ENCODE measurements at regions of chr12 and their contacts with region 1.

Region 1: DNA sequence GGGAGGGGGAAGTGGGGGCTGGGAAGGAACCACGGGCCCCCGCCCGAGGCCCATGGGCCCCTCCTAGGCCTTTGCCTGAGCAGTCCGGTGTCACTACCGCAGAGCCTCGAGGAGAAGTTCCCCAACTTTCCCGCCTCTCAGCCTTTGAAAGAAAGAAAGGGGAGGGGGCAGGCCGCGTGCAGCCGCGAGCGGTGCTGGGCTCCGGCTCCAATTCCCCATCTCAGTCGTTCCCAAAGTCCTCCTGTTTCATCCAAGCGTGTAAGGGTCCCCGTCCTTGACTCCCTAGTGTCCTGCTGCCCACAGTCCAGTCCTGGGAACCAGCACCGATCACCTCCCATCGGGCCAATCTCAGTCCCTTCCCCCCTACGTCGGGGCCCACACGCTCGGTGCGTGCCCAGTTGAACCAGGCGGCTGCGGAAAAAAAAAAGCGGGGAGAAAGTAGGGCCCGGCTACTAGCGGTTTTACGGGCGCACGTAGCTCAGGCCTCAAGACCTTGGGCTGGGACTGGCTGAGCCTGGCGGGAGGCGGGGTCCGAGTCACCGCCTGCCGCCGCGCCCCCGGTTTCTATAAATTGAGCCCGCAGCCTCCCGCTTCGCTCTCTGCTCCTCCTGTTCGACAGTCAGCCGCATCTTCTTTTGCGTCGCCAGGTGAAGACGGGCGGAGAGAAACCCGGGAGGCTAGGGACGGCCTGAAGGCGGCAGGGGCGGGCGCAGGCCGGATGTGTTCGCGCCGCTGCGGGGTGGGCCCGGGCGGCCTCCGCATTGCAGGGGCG is at the start of gene GAPDH:
- DNase-seq: peak in 12 of 14 experiments; percentile 69 to 93 (median 81)
- ATAC-seq: peak; percentile 6
- H3K4me3 ChIP-seq: peak within 1 kb of the TSS; percentile 88
- H3K4me3 Mint-ChIP-seq: peak within 1 kb of the TSS; percentile 96
- H3K27ac ChIP-seq: peak within 1 kb of the TSS; percentile 91 to 93
- H3K27ac Mint-ChIP-seq: peak within 1 kb of the TSS; percentile 90
- H3K4me1 ChIP-seq: peaks cover 64% of the 10 kb centered on the region
- H3K4me1 Mint-ChIP-seq: peaks cover 53% of the 10 kb centered on the region
- H3K27me3 ChIP-seq: no peaks in the 10 kb centered on the region
- H3K27me3 Mint-ChIP-seq: no peaks in the 10 kb centered on the region
- CTCF ChIP-seq: no peak
- total RNA-seq, gene GAPDH: 498 to 508 TPM

Region 2: GRCh38 chr12:5264006-5264405 is 1270.1 kb before region 1 on chr12:
- CTCF ChIA-PET with region 1: no interaction called
- POLR2A ChIA-PET with region 1: no interaction called
- intact Hi-C with region 1: no loop called
- DNase-seq: no peak
- ATAC-seq: no peak
- H3K4me3 ChIP-seq: no peak overlapping the region
- H3K4me3 Mint-ChIP-seq: no peak overlapping the region
- H3K27ac ChIP-seq: no peak overlapping the region
- H3K27ac Mint-ChIP-seq: no peak overlapping the region
- H3K4me1 ChIP-seq: no peaks in the 10 kb centered on the region
- H3K4me1 Mint-ChIP-seq: no peaks in the 10 kb centered on the region
- H3K27me3 ChIP-seq: no peaks in the 10 kb centered on the region
- H3K27me3 Mint-ChIP-seq: no peaks in the 10 kb centered on the region
- CTCF ChIP-seq: no peak

Region 3: DNA sequence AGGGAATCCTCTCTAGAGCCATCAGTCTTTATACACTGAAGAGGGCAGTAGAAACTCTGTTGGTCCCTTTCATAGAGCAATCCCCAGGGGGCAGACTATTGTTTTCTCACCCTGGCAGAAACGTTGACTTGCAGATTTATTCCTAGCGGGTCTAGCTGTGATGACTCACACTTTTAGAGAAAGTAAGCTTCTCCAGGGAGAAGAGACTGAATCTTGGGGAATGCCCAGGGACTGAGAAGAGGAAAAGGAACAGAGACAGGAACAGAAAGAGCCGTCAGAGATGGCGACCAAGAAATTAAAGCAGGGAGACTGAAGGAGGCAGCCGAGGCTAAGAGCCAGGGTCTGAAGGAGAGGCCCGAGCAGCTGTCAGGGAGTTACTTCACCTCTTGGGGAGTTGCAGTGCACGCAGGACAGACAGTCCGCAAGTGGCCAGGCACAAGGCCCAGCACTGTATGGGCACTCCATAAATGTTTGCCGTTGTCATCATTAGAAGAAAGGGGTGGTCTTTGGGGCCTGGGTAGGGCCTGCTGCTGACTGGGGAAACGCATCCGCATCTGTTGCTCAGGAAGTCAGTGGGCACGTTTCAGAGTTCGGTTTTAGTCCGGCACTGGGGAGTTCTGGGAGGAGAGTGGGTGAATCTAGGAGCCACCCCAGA is 210.6 kb before region 1 on chr12:
- CTCF ChIA-PET with region 1: interaction called, 3 read pairs
- POLR2A ChIA-PET with region 1: interaction called, 3 read pairs
- intact Hi-C with region 1: loop called in 1 of 2 experiments (anchors 5 kb)
- DNase-seq: peak in 7 of 14 experiments; percentile 18 to 83 (median 63)
- ATAC-seq: peak; percentile 89
- H3K4me3 ChIP-seq: peak overlapping the region; percentile 12
- H3K4me3 Mint-ChIP-seq: peak overlapping the region; percentile 86
- H3K27ac ChIP-seq: peak overlapping the region; percentile 12 to 13
- H3K27ac Mint-ChIP-seq: peak overlapping the region; percentile 85
- H3K4me1 ChIP-seq: peaks cover 45% of the 10 kb centered on the region
- H3K4me1 Mint-ChIP-seq: peaks cover 60% of the 10 kb centered on the region
- H3K27me3 ChIP-seq: no peaks in the 10 kb centered on the region
- H3K27me3 Mint-ChIP-seq: no peaks in the 10 kb centered on the region
- CTCF ChIP-seq: peak; percentile 72

Region 4: GRCh38 chr12:6341417-6342139 is 192.5 kb before region 1 on chr12 and contains the start of gene TNFRSF1A:
- CTCF ChIA-PET with region 1: interaction called, 3 read pairs
- POLR2A ChIA-PET with region 1: interaction called, 9 read pairs
- intact Hi-C with region 1: loop called in 1 of 2 experiments (anchors 2 kb)
- DNase-seq: peak in 9 of 14 experiments; percentile 31 to 75 (median 44)
- ATAC-seq: peak; percentile 54
- H3K4me3 ChIP-seq: peak within 1 kb of the TSS; percentile 100
- H3K4me3 Mint-ChIP-seq: no peak within 1 kb of the TSS
- H3K27ac ChIP-seq: peak within 1 kb of the TSS; percentile 80 to 90
- H3K27ac Mint-ChIP-seq: no peak within 1 kb of the TSS
- H3K4me1 ChIP-seq: peaks cover 78% of the 10 kb centered on the region
- H3K4me1 Mint-ChIP-seq: peaks cover 39% of the 10 kb centered on the region
- H3K27me3 ChIP-seq: no peaks in the 10 kb centered on the region
- H3K27me3 Mint-ChIP-seq: no peaks in the 10 kb centered on the region
- CTCF ChIP-seq: no peak
- total RNA-seq, gene TNFRSF1A: 16.3 to 19.2 TPM

Region 5: GRCh38 chr12:6443361-6443983 is 90.6 kb before region 1 on chr12:
- CTCF ChIA-PET with region 1: interaction called, 4 read pairs
- POLR2A ChIA-PET with region 1: interaction called, 31 read pairs
- intact Hi-C with region 1: no loop called
- DNase-seq: peak in 3 of 14 experiments; percentile 32 to 47 (median 44)
- ATAC-seq: no peak
- H3K4me3 ChIP-seq: no peak overlapping the region
- H3K4me3 Mint-ChIP-seq: peak overlapping the region; percentile 98
- H3K27ac ChIP-seq: peak overlapping the region; percentile 64 to 65
- H3K27ac Mint-ChIP-seq: peak overlapping the region; percentile 97
- H3K4me1 ChIP-seq: peaks cover 56% of the 10 kb centered on the region
- H3K4me1 Mint-ChIP-seq: peaks cover 63% of the 10 kb centered on the region
- H3K27me3 ChIP-seq: no peaks in the 10 kb centered on the region
- H3K27me3 Mint-ChIP-seq: no peaks in the 10 kb centered on the region
- CTCF ChIP-seq: no peak

Region 6: GRCh38 chr12:6451348-6452244 is 82.5 kb before region 1 on chr12 and contains the start of gene TAPBPL:
- CTCF ChIA-PET with region 1: interaction called, 11 read pairs
- POLR2A ChIA-PET with region 1: interaction called, 42 read pairs
- intact Hi-C with region 1: no loop called
- DNase-seq: peak; percentile 61 to 95 (median 74)
- ATAC-seq: peak; percentile 92
- H3K4me3 ChIP-seq: peak within 1 kb of the TSS; percentile 97
- H3K4me3 Mint-ChIP-seq: peak within 1 kb of the TSS; percentile 94
- H3K27ac ChIP-seq: peak within 1 kb of the TSS; percentile 96 to 99
- H3K27ac Mint-ChIP-seq: peak within 1 kb of the TSS; percentile 98
- H3K4me1 ChIP-seq: peaks cover 71% of the 10 kb centered on the region
- H3K4me1 Mint-ChIP-seq: peaks cover 77% of the 10 kb centered on the region
- H3K27me3 ChIP-seq: no peaks in the 10 kb centered on the region
- H3K27me3 Mint-ChIP-seq: no peaks in the 10 kb centered on the region
- CTCF ChIP-seq: no peak
- total RNA-seq, gene TAPBPL: 14.7 to 15.8 TPM

Region 7: GRCh38 chr12:6493497-6494257 is 40.4 kb before region 1 on chr12 and contains the start of gene NCAPD2:
- CTCF ChIA-PET with region 1: interaction called, 28 read pairs
- POLR2A ChIA-PET with region 1: interaction called, 13 read pairs
- intact Hi-C with region 1: loop called (anchors 1 kb)
- DNase-seq: peak; percentile 87 to 98 (median 92)
- ATAC-seq: peak; percentile 84
- H3K4me3 ChIP-seq: peak within 1 kb of the TSS; percentile 96
- H3K4me3 Mint-ChIP-seq: peak within 1 kb of the TSS; percentile 93
- H3K27ac ChIP-seq: peak within 1 kb of the TSS; percentile 89 to 94
- H3K27ac Mint-ChIP-seq: peak within 1 kb of the TSS; percentile 91
- H3K4me1 ChIP-seq: peaks cover 34% of the 10 kb centered on the region
- H3K4me1 Mint-ChIP-seq: peaks cover 48% of the 10 kb centered on the region
- H3K27me3 ChIP-seq: no peaks in the 10 kb centered on the region
- H3K27me3 Mint-ChIP-seq: no peaks in the 10 kb centered on the region
- CTCF ChIP-seq: no peak
- total RNA-seq, gene NCAPD2: 13.7 to 14.9 TPM

Measured in CD4-positive, alpha-beta T cell (primary cell).